Activated CD4-positive, alpha-beta T cell treated with anti-CD3 and anti-CD28 coated beads for 36 hours (primary cell): ENCODE measurements at regions of chr4 and their contacts with region 1.

Region 1: GRCh38 chr4:139603576-139604387 is 47.8 kb upstream of the SETD7 start:
- DNase-seq: peak; percentile 45
- ATAC-seq: peak; percentile 62
- H3K4me3 Mint-ChIP-seq: no peak overlapping the region
- H3K27ac Mint-ChIP-seq: no peak overlapping the region
- H3K4me1 Mint-ChIP-seq: peaks cover 10% of the 10 kb centered on the region
- H3K27me3 Mint-ChIP-seq: peaks cover 5% of the 10 kb centered on the region

Region 2: GRCh38 chr4:139619644-139620043 is 15.9 kb after region 1 on chr4:
- CTCF ChIA-PET with region 1: interaction called, 13 read pairs
- POLR2A ChIA-PET with region 1: no interaction called
- intact Hi-C with region 1: no loop called
- DNase-seq: peak; percentile 21
- ATAC-seq: peak; percentile 78
- H3K4me3 Mint-ChIP-seq: no peak overlapping the region
- H3K27ac Mint-ChIP-seq: no peak overlapping the region
- H3K4me1 Mint-ChIP-seq: no peaks in the 10 kb centered on the region
- H3K27me3 Mint-ChIP-seq: peaks cover 12% of the 10 kb centered on the region

Region 3: DNA sequence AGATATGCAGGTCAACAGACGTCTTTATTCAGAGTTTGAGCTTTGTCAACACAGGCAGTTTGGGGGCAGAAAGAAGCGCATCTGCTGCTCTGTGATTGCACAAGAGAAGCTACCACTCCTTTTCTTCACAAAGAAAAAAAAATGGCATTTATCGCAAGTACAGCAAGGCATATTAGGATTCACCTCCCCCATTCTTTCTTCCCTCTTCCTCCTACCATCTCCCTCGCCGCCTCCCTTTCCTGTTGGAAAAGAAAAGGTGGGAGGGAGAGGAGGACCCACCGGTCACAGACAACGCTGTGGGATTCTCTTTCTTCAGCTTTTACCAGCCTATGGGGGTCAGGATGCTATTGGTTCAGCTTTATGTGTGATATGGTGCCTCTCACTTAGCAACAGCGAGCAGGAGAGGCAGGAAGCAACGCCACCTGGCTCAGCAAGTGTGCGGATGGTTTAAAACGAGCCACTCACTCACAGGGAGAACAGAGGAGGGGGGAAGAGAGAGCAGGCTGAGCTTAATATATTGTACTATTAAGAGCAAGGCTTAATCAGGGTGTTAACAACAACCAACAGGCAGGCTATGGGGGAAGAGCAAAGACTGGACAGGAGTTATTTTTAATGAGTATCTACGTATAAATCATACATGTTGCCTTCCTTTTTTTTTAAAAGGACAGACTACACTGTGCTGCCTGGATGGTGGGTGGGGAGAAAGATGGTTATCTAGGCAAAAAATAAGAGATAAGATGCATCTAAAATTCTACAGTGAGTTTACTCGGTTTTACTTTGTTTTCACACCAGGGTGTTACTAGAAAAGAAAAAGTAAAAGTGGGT is 445.5 kb after region 1 on chr4:
- CTCF ChIA-PET with region 1: no interaction called
- POLR2A ChIA-PET with region 1: no interaction called
- intact Hi-C with region 1: loop called in 1 of 2 experiments (anchors 5 kb)
- DNase-seq: peak; percentile 71
- ATAC-seq: peak; percentile 91
- H3K4me3 Mint-ChIP-seq: peak overlapping the region; percentile 73
- H3K27ac Mint-ChIP-seq: peak overlapping the region; percentile 87
- H3K4me1 Mint-ChIP-seq: peaks cover 45% of the 10 kb centered on the region
- H3K27me3 Mint-ChIP-seq: peaks cover 8% of the 10 kb centered on the region